T-cell (primary cell): ENCODE measurements at regions of chr13 and their contacts with region 1.

Region 1: DNA sequence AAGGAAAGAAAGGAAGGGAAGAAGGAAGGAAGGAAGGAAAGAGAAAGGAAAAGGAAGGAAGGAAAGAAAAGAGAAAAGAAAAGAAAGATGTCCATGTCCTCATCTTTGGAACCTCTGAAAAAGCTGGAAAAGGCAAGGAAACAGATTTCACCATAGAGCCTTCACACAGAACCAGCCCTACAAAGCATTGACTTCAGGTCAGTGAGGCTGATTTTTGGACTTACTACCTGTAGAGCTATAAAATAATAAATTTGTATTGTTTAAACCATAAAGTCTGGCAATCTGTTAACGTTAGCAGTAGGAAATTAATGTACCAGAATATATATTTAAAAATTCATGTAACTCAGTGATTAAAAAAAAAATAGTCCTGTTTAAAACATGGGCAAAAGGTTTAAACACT is 130.0 kb downstream of the PIBF1 start:
- DNase-seq: no peak
- ATAC-seq: no peak
- H3K4me3 ChIP-seq: no peak overlapping the region
- H3K4me3 Mint-ChIP-seq: no peak overlapping the region
- H3K27ac ChIP-seq: no peak overlapping the region
- H3K27ac Mint-ChIP-seq: no peak overlapping the region
- H3K4me1 ChIP-seq: no peaks in the 10 kb centered on the region
- H3K4me1 Mint-ChIP-seq: no peaks in the 10 kb centered on the region
- H3K27me3 ChIP-seq: no peaks in the 10 kb centered on the region
- H3K27me3 Mint-ChIP-seq: no peaks in the 10 kb centered on the region

Region 2: DNA sequence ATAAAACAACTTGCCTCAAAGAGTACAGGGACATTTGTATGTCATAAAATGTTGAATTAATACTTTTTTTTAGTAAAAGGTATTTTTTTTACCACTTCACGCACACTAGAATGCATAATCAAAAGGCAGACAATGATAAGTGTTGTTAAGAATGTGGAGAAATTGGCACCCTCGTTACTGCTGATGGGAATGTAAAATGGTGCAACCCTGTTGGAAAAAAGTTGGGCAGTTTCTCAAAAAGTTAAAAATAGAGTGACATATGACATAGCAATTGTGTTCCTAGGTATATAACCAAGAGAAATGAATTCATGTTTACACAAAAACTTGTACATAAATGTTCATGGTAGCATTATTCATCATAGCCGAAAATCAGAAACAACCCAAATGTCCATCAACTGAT is 20.6 kb before region 1 on chr13:
- CTCF ChIA-PET with region 1: no interaction called
- POLR2A ChIA-PET with region 1: no interaction called
- DNase-seq: no peak
- ATAC-seq: no peak
- H3K4me3 ChIP-seq: no peak overlapping the region
- H3K4me3 Mint-ChIP-seq: no peak overlapping the region
- H3K27ac ChIP-seq: no peak overlapping the region
- H3K27ac Mint-ChIP-seq: no peak overlapping the region
- H3K4me1 ChIP-seq: no peaks in the 10 kb centered on the region
- H3K4me1 Mint-ChIP-seq: no peaks in the 10 kb centered on the region
- H3K27me3 ChIP-seq: no peaks in the 10 kb centered on the region
- H3K27me3 Mint-ChIP-seq: no peaks in the 10 kb centered on the region

Region 3: GRCh38 chr13:73074036-73074435 is 162.1 kb after region 1 on chr13:
- CTCF ChIA-PET with region 1: no interaction called
- POLR2A ChIA-PET with region 1: no interaction called
- DNase-seq: no peak
- ATAC-seq: no peak
- H3K4me3 ChIP-seq: no peak overlapping the region
- H3K4me3 Mint-ChIP-seq: no peak overlapping the region
- H3K27ac ChIP-seq: no peak overlapping the region
- H3K27ac Mint-ChIP-seq: no peak overlapping the region
- H3K4me1 ChIP-seq: peaks cover 0 to 4% of the 10 kb centered on the region in 2 experiments
- H3K4me1 Mint-ChIP-seq: peaks cover 0 to 4% (median 3%) of the 10 kb centered on the region in 3 donors
- H3K27me3 ChIP-seq: no peaks in the 10 kb centered on the region
- H3K27me3 Mint-ChIP-seq: no peaks in the 10 kb centered on the region

Region 4: DNA sequence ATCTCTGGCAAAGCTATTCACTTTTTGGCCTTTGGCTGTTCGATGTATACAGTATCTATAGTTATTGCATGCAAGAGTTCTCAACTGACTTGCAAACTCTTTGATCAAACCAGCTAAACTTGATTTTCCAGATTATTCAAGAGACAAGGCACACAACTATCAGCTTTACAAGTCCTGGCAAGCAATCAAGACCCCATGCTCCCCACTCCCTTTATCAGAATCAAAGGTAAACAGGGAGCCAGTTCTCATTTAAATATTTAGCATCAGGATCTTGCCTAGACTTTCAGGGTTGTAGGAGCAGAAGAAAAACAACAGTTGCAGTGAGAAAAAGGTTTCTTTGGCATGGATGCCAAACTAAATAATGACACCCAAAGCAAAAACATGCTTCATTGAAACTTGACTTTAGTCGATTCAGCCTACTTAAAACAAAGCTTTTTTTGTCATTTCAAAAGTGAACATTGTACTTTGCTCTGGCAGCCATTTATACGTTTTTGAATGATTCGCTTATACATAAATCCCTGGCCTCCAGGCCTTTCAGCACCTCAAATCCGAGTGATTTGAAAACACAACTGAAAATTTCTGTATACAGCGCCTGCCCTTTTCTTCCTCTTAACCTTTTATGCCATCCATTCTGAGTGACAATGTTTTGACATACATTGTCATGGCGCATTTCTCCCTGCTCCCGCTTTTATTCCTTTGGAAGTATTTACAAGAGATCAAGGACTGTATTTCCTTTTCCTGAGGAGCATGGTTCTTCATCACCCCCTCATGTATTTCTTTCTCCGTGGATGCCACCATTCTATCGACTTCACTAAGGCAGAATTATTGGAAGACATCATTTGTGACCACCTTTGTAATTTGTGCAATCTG is 487.6 kb after region 1 on chr13:
- CTCF ChIA-PET with region 1: no interaction called
- POLR2A ChIA-PET with region 1: no interaction called
- DNase-seq: no peak
- ATAC-seq: no peak
- H3K4me3 ChIP-seq: no peak overlapping the region
- H3K4me3 Mint-ChIP-seq: no peak overlapping the region
- H3K27ac ChIP-seq: no peak overlapping the region
- H3K27ac Mint-ChIP-seq: no peak overlapping the region
- H3K4me1 ChIP-seq: no peaks in the 10 kb centered on the region
- H3K4me1 Mint-ChIP-seq: no peaks in the 10 kb centered on the region
- H3K27me3 ChIP-seq: no peaks in the 10 kb centered on the region
- H3K27me3 Mint-ChIP-seq: no peaks in the 10 kb centered on the region

Region 5: GRCh38 chr13:73422973-73423372 is 511.0 kb after region 1 on chr13:
- CTCF ChIA-PET with region 1: interaction called in 1 of 2 experiments, 12 read pairs
- POLR2A ChIA-PET with region 1: no interaction called
- DNase-seq: no peak
- ATAC-seq: no peak
- H3K4me3 ChIP-seq: no peak overlapping the region
- H3K4me3 Mint-ChIP-seq: no peak overlapping the region
- H3K27ac ChIP-seq: no peak overlapping the region
- H3K27ac Mint-ChIP-seq: no peak overlapping the region
- H3K4me1 ChIP-seq: no peaks in the 10 kb centered on the region
- H3K4me1 Mint-ChIP-seq: no peaks in the 10 kb centered on the region
- H3K27me3 ChIP-seq: no peaks in the 10 kb centered on the region
- H3K27me3 Mint-ChIP-seq: no peaks in the 10 kb centered on the region